ENCODE measurements at regions of chr6 and their contacts with region 1.

Region 1: DNA sequence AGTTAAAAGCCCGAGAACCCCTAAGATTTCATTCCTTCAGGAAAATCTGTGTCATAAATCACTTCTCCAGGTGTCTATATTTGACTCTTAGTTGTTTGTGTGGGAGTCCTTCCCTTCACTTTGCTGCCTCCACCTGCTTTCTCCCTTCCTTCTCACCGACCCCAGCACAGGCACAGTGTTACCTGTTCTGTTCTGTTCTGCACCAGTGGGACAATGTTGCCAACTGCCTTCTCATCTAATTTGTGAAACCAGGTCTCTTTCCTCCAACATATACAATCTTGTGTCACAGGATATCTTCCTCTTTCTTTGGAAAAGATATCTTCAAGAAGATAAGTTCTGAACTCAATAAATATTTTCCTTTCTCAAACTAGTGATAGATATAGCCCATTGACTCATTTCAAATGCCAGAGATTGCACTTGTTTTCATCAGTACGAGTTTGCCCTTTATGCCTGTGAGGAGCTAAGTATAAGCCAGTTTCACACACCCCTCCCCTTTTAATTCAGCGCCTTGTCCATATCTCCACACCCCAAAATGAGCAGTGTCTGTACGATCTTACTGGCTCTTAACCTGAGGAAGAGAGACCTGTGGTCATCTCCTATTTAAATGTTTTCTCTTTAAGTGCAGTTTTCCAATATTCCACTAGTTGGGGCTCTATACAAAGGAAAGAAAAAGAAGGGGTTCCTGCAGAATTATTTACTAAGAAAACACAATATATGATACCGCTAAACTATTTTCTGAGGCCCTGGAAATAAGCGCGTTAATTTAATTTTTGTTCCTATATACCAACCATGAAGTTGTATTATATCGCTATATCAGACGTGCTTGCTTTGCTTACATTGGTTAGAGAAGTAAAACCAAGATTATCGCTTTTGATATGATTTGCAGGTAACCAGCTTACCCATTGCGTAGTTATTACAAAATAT is 81.6 kb upstream of the PREP start:
- DNase-seq: no peak
- H3K4me3 Mint-ChIP-seq: peak overlapping the region; percentile 27
- H3K27ac Mint-ChIP-seq: peak overlapping the region; percentile 59
- H3K4me1 Mint-ChIP-seq: peaks cover 72% of the 10 kb centered on the region
- H3K27me3 Mint-ChIP-seq: peaks cover 7% of the 10 kb centered on the region

Region 2: DNA sequence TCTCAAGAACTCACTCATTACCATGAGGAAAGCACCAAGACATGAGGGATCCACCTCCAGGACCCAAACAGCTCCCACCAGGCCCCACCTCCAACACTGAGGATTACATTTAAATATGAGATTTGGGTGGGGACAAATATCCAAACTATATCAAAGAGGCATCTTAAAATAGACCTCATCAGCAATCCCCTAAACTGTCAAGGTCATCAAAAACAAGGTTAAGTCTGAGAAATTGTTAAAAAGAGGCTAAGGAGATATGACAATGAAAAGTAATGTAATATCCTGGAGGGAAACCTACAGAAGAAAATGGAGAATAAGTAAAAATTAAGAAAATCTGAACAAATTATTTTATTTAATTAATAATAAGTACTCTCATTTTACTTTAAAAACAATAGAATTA is 1547.1 kb before region 1 on chr6:
- intact Hi-C with region 1: no loop called
- DNase-seq: no peak
- H3K4me3 Mint-ChIP-seq: no peak overlapping the region
- H3K27ac Mint-ChIP-seq: no peak overlapping the region
- H3K4me1 Mint-ChIP-seq: no peaks in the 10 kb centered on the region
- H3K27me3 Mint-ChIP-seq: no peaks in the 10 kb centered on the region

Region 3: GRCh38 chr6:105560611-105561066 is 76.1 kb after region 1 on chr6:
- intact Hi-C with region 1: loop called (anchors 2 kb)
- DNase-seq: no peak
- H3K4me3 Mint-ChIP-seq: no peak overlapping the region
- H3K27ac Mint-ChIP-seq: no peak overlapping the region
- H3K4me1 Mint-ChIP-seq: peaks cover 14% of the 10 kb centered on the region
- H3K27me3 Mint-ChIP-seq: peaks cover 5% of the 10 kb centered on the region

Region 4: GRCh38 chr6:105620878-105621277 is 136.4 kb after region 1 on chr6:
- intact Hi-C with region 1: loop called (anchors 1 kb)
- DNase-seq: peak; percentile 19
- H3K4me3 Mint-ChIP-seq: peak overlapping the region; percentile 46
- H3K27ac Mint-ChIP-seq: peak overlapping the region; percentile 91
- H3K4me1 Mint-ChIP-seq: peaks cover 46% of the 10 kb centered on the region
- H3K27me3 Mint-ChIP-seq: peaks cover 2% of the 10 kb centered on the region

Region 5: GRCh38 chr6:105793130-105793529 is 308.6 kb after region 1 on chr6:
- intact Hi-C with region 1: loop called (anchors 2 kb)
- DNase-seq: no peak
- H3K4me3 Mint-ChIP-seq: peak overlapping the region; percentile 5
- H3K27ac Mint-ChIP-seq: peak overlapping the region; percentile 66
- H3K4me1 Mint-ChIP-seq: peaks cover 86% of the 10 kb centered on the region
- H3K27me3 Mint-ChIP-seq: no peaks in the 10 kb centered on the region

Region 6: GRCh38 chr6:105992315-105992961 is 507.9 kb after region 1 on chr6:
- intact Hi-C with region 1: loop called (anchors 2 kb)
- DNase-seq: peak; percentile 91
- H3K4me3 Mint-ChIP-seq: peak overlapping the region; percentile 89
- H3K27ac Mint-ChIP-seq: peak overlapping the region; percentile 96
- H3K4me1 Mint-ChIP-seq: peaks cover 66% of the 10 kb centered on the region
- H3K27me3 Mint-ChIP-seq: peaks cover 24% of the 10 kb centered on the region

Region 7: GRCh38 chr6:106223300-106223930 is 738.9 kb after region 1 on chr6:
- intact Hi-C with region 1: loop called (anchors 1 kb)
- DNase-seq: peak; percentile 54
- H3K4me3 Mint-ChIP-seq: no peak overlapping the region
- H3K27ac Mint-ChIP-seq: no peak overlapping the region
- H3K4me1 Mint-ChIP-seq: peaks cover 59% of the 10 kb centered on the region
- H3K27me3 Mint-ChIP-seq: no peaks in the 10 kb centered on the region